GM10248 (cell line): ENCODE measurements at regions of chr4 and their contacts with region 1.

Region 1: DNA sequence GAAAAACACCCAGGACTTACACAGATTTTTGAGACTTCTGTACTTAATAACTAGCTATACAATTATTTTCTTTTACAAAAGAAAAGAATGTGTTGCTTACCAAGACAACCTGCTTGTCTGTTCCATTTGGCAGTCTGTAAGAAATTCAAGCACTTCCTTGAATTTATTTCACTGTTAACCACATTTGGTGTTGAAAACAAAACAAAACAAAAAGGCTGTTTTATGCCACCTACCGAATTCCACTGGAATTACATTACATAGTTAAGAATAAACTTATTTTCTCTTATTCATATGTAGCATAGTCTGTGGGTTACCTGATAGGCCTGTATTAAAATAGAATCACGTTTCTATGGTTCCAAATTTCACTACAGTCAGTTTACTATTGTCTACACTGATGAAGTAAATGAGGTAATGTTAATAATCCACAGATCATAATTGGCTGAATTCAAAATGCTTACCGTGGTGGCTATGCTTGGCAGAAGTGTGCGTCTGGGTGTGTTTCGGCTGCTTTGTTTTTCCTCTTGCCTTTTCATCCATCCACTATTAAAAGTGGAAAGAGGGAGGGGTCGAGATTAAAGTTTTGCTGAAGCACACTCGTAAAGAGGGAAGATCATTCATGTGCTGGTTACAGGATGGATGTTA is at the start of gene TLR1:
- DNase-seq: no peak
- CTCF ChIP-seq: peak; percentile 41

Region 2: DNA sequence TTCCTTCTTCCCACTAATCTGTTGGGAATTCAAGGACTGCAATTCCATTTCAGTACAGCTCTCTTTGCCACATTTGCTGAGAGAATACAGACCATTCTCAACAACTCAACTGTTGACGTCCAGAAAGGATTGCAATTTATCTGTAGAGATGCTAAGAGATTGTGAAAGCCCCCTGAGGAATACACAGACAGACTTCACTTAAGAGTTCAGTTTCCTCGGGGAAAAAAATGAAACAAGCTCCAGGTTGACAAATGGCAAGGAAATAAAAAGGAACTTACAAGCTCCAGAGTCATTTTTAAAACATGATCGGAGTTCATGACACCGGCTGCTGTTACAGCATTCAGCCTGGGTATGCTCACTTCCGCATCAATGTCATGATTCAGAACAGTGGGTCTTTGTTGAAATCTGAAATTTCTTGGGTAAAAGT is 35.8 kb before region 1 on chr4:
- CTCF ChIA-PET with region 1: interaction called, 11 read pairs
- POLR2A ChIA-PET with region 1: interaction called, 3 read pairs
- DNase-seq: no peak
- CTCF ChIP-seq: no peak

Region 3: DNA sequence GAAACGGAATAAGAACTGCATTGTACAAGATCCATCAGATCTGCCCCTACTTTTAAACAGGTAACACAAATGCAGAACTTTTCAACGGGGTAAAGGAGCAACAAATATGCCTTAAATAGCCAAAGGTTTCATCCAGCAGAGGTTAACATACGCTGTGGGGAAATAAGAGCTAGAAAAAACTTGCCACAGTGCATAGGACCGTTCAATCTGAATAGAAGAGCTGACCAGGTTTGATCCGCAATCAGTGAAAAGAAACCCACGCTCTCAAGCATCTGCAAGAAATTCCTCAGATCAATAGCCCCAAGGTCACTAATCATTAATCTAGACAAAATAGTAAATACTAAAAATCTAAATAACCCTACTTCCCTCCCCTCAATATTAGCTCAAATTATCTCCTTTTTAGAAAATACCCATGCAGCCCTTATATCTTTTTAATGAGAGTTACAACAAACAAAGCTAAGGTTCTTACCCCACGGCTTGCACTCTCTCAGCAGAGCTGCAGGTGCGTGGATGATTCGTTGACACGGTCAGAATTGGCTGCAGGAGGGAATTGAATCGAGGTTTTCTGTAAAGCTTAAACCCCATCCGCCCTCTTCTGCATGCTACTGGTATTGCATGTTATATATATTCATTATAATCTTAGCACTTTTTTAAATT is 22.2 kb before region 1 on chr4 and contains the start of gene TLR10:
- CTCF ChIA-PET with region 1: interaction called, 256 read pairs
- POLR2A ChIA-PET with region 1: interaction called, 10 read pairs
- DNase-seq: peak; percentile 67
- CTCF ChIP-seq: peak; percentile 55

Region 4: GRCh38 chr4:38788327-38788726 is 16.4 kb before region 1 on chr4:
- CTCF ChIA-PET with region 1: interaction called, 256 read pairs
- POLR2A ChIA-PET with region 1: interaction called, 4 read pairs
- DNase-seq: no peak
- CTCF ChIP-seq: no peak

Region 5: DNA sequence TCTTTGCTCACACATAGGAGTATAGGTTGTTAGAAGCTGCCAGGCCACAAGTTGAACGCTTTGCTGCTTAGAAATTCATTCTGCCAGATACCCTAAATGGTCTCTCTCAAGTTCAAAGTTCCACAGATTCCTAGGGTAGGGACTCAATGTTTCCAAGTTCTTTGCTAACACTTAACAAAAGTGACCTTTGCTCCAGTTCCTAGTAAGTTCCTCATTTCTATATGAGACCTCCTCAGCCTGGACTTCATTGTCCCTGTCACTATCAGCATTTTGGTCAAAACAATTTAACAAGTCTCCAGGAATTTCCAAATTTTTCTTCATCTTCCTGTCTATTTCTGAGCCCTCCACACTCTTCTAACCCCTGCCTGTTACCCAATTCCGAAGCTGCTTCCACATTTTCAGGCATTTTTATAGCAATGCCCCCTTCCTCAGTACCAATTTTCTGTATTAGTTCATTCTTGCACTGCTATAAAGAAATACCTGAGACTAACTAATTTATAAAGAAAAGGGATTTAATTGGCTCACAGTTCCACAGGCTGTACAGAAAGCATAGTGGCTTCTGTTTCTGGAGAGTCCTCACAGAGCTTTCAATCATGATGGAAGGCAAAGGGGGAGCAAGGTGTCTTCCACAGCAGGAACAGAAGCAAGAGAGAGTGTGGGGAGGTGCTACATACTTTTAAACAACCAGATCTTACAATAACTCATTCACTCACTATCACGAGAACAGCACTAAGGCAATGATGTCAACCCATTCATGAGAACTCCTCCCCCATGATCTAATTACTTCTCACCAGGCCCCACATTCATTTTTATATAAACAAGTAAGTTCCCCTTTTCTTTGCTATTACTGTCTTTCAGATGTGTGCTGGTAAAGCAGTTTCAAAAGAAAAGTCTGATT is 11.4 kb after region 1 on chr4:
- CTCF ChIA-PET with region 1: interaction called, 23 read pairs
- POLR2A ChIA-PET with region 1: interaction called, 14 read pairs
- DNase-seq: no peak
- CTCF ChIP-seq: no peak